ENCODE measurements at regions of chr3 and their contacts with region 1.

Region 1: GRCh38 chr3:115321400-115321805 is 174.3 kb upstream of the ZBTB20 start:
- DNase-seq: no peak

Region 2: DNA sequence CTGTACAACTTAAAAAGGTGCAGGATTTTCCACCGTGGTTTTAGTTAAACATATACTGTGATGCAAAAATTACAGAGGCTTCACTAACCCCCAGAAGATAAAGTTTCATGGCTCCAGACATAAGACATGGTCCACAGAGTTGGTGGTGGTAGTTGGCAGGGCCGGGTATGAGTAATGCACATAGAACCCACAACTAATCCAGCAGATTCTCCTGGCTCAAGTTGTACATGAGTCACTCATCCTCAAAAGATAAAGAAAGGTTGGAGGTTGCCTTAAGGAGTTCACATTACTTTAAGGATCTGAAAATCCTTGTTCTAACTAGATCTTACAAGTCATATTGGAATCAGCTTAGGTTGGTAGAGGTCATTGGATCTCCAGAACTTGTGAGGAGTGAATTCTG is 76.0 kb before region 1 on chr3:
- intact Hi-C with region 1: loop called (anchors 5 kb)
- DNase-seq: no peak

Region 3: GRCh38 chr3:115380883-115381572 is 59.6 kb after region 1 on chr3:
- intact Hi-C with region 1: no loop called
- DNase-seq: no peak